SK-N-SH (cell line): ENCODE measurements at regions of chr17 and their contacts with region 1.

Region 1: GRCh38 chr17:77494664-77495435 is 354.1 kb downstream of the SEC14L1 start:
- DNase-seq: peak; percentile 96
- H3K4me3 ChIP-seq: no peak overlapping the region; a peak in 1 of 4 replicates
- H3K27ac ChIP-seq: peak overlapping the region; percentile 18 to 29; a peak in 2 of 4 replicates
- H3K4me1 ChIP-seq: peaks cover 4% of the 10 kb centered on the region in 2 experiments; a peak in 2 of 4 replicates
- H3K27me3 ChIP-seq: no peaks in the 10 kb centered on the region
- CTCF ChIP-seq: peak; percentile 100
- EP300 ChIP-seq: no peak
- RAD21 ChIP-seq: peak; percentile 100

Region 2: GRCh38 chr17:77391668-77392375 is 103.0 kb before region 1 on chr17:
- CTCF ChIA-PET with region 1: interaction called, 85 read pairs
- POLR2A ChIA-PET with region 1: no interaction called
- DNase-seq: no peak
- H3K4me3 ChIP-seq: no peak overlapping the region
- H3K27ac ChIP-seq: peak overlapping the region; percentile 73 to 83
- H3K4me1 ChIP-seq: peaks cover 60 to 76% of the 10 kb centered on the region in 2 experiments
- H3K27me3 ChIP-seq: no peaks in the 10 kb centered on the region
- CTCF ChIP-seq: no peak
- EP300 ChIP-seq: no peak; a peak in 1 of 4 replicates
- RAD21 ChIP-seq: no peak

Region 3: GRCh38 chr17:77420804-77421629 is 73.8 kb before region 1 on chr17:
- CTCF ChIA-PET with region 1: interaction called, 566 read pairs
- POLR2A ChIA-PET with region 1: no interaction called
- DNase-seq: peak; percentile 72
- H3K4me3 ChIP-seq: peak overlapping the region; percentile 2 to 8; a peak in 2 of 4 replicates
- H3K27ac ChIP-seq: peak overlapping the region; percentile 67
- H3K4me1 ChIP-seq: peaks cover 74 to 76% of the 10 kb centered on the region in 2 experiments
- H3K27me3 ChIP-seq: no peaks in the 10 kb centered on the region
- CTCF ChIP-seq: 0 out of 2 replicates have a peak, but pooled peaks have one; percentile 2
- EP300 ChIP-seq: peak; percentile 22 to 58; a peak in 1 of 4 replicates
- RAD21 ChIP-seq: no peak

Region 4: DNA sequence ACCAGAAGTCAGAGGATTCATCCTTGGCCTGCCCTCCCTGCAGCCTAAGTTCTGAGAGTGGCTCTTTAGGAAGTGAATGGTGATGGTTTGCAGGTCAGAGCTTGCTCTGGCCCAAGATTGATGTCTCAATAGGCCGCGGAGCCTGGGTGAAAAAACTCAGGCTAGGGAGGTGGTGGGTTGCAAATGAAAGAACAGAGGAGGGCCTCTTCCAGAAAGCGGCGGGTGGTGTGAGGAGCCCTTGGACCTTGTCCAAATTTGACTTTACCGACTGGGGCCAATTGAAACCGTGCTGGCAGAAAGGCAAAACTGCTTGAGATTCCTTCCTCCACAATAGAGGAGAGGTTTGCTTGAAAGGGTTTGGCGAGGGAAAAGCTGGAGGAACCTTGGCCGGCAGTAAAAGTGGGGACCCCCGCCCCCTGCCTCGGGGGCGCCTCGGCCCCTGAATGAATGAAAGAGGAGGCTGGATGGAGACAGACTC is 22.8 kb before region 1 on chr17:
- CTCF ChIA-PET with region 1: interaction called, 21 read pairs
- POLR2A ChIA-PET with region 1: no interaction called
- DNase-seq: peak; percentile 67
- H3K4me3 ChIP-seq: no peak overlapping the region
- H3K27ac ChIP-seq: peak overlapping the region; percentile 52 to 74
- H3K4me1 ChIP-seq: peaks cover 69 to 70% of the 10 kb centered on the region in 2 experiments
- H3K27me3 ChIP-seq: no peaks in the 10 kb centered on the region
- CTCF ChIP-seq: no peak
- EP300 ChIP-seq: no peak
- RAD21 ChIP-seq: no peak

Region 5: DNA sequence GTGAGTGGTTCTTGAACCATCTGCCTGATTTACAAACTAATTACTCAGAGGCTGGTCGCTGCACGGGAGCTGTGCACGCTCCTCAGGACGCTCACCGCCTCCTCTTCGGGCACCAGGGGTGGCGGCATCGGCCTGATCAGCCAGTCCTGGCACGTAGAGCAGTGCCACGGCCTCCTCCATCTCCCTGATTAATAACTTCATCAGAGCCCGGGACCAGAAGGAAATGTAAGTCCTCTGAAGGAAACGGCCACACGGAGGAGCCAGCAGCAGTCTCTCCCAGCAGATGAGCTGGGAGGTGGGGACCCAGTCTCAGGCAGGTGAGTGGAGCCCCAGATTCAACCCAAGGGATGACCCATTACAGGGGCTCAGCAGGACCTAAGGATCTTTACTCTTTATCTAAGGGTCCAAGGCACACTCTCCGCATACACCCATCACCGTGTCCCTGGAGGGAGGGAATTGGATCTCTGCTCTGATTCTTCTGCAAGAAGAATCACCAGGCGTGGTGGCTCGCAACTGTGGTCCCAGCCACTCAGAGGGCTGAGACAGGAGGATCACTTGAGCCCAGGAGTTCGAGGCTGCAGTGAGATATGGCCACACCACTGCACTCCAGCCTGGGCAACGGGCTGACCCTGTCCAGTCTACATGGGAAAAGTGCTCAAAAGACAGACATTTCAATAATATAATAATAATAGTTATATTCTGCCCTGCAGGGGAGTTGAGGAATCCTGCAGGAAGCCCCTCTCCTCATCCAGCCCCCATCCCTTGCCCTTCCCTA is 12.4 kb after region 1 on chr17:
- CTCF ChIA-PET with region 1: interaction called, 20 read pairs
- POLR2A ChIA-PET with region 1: no interaction called
- DNase-seq: peak; percentile 39
- H3K4me3 ChIP-seq: no peak overlapping the region
- H3K27ac ChIP-seq: no peak overlapping the region
- H3K4me1 ChIP-seq: peaks cover 0 to 4% of the 10 kb centered on the region in 2 experiments; a peak in 1 of 4 replicates
- H3K27me3 ChIP-seq: no peaks in the 10 kb centered on the region
- CTCF ChIP-seq: no peak
- EP300 ChIP-seq: no peak
- RAD21 ChIP-seq: no peak

Region 6: GRCh38 chr17:77681861-77682260 is 187.0 kb after region 1 on chr17:
- CTCF ChIA-PET with region 1: no interaction called
- POLR2A ChIA-PET with region 1: no interaction called
- DNase-seq: peak; percentile 73
- H3K4me3 ChIP-seq: no peak overlapping the region
- H3K27ac ChIP-seq: no peak overlapping the region
- H3K4me1 ChIP-seq: peaks cover 0 to 11% of the 10 kb centered on the region in 2 experiments; a peak in 1 of 4 replicates
- H3K27me3 ChIP-seq: peaks cover 30% of the 10 kb centered on the region
- CTCF ChIP-seq: no peak
- EP300 ChIP-seq: no peak
- RAD21 ChIP-seq: peak; percentile 17; the same call in 1 of the 2 replicates